CD8-positive, alpha-beta T cell (primary cell): ENCODE measurements at regions of chr6 and their contacts with region 1.

Region 1: GRCh38 chr6:3848925-3849605 is at the start of gene FAM50B:
- DNase-seq: peak; percentile 81 to 94 (median 90)
- ATAC-seq: peak; percentile 95
- H3K4me3 ChIP-seq: peak within 1 kb of the TSS; percentile 54 to 63
- H3K4me3 Mint-ChIP-seq: peak within 1 kb of the TSS; percentile 80
- H3K27ac ChIP-seq: peak within 1 kb of the TSS; percentile 47 to 56
- H3K27ac Mint-ChIP-seq: peak within 1 kb of the TSS; percentile 84
- H3K4me1 ChIP-seq: peaks cover 6% of the 10 kb centered on the region
- H3K4me1 Mint-ChIP-seq: peaks cover 18% of the 10 kb centered on the region
- H3K27me3 ChIP-seq: no peaks in the 10 kb centered on the region
- H3K27me3 Mint-ChIP-seq: no peaks in the 10 kb centered on the region
- CTCF ChIP-seq: peak; percentile 75
- total RNA-seq, gene FAM50B: 0.97 to 1.1 TPM

Region 2: GRCh38 chr6:3929281-3929798 is 80.3 kb after region 1 on chr6:
- CTCF ChIA-PET with region 1: interaction called, 17 read pairs
- POLR2A ChIA-PET with region 1: interaction called, 4 read pairs
- intact Hi-C with region 1: no loop called
- DNase-seq: no peak
- ATAC-seq: no peak
- H3K4me3 ChIP-seq: no peak overlapping the region
- H3K4me3 Mint-ChIP-seq: no peak overlapping the region
- H3K27ac ChIP-seq: no peak overlapping the region
- H3K27ac Mint-ChIP-seq: no peak overlapping the region
- H3K4me1 ChIP-seq: no peaks in the 10 kb centered on the region
- H3K4me1 Mint-ChIP-seq: no peaks in the 10 kb centered on the region
- H3K27me3 ChIP-seq: no peaks in the 10 kb centered on the region
- H3K27me3 Mint-ChIP-seq: peaks cover 10% of the 10 kb centered on the region
- CTCF ChIP-seq: no peak

Region 3: DNA sequence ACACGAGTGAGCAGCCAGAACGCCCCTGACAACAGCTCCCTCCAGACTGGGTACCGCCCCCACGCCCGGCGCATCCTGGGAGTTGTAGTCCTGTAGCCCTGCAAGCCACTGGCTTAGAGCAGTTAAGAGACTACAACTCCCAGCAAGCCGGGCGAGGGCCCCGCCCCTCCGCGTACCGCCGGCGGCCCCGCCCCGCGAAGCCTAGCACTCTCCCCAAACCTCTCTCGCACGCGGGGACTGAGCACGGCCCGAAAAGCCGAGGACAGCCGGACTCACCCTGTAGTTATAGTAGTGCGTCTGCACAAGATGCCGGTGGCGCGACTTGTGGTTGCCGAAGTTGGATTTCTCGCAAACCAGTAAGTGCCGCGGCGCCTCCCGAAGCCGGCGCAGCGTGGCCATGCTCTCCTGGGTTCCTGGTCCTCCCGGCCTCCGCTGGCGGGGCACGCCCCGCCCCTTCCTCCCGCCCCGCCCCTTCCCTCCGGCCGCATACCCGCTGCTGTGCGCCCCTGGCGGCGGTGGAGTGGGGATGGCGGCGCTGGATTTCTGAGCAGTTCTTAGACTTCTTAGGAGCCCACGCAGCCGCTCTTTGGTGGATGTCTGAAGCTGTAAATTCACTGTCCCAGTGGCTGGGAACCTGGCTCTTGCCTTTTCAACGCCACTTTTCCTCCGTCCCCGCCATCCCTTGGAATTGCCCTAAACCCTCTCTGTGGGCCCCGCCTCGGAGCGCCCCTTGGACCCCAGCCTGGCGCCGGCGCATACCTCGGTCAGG is 1154.7 kb after region 1 on chr6 and contains the start of gene RPP40:
- CTCF ChIA-PET with region 1: no interaction called
- POLR2A ChIA-PET with region 1: no interaction called
- intact Hi-C with region 1: loop called in 1 of 2 experiments (anchors 5 kb)
- DNase-seq: peak; percentile 97 to 99 (median 98)
- ATAC-seq: peak; percentile 94
- H3K4me3 ChIP-seq: peak within 1 kb of the TSS; percentile 80 to 95
- H3K4me3 Mint-ChIP-seq: peak within 1 kb of the TSS; percentile 94
- H3K27ac ChIP-seq: peak within 1 kb of the TSS; percentile 79 to 82
- H3K27ac Mint-ChIP-seq: peak within 1 kb of the TSS; percentile 97
- H3K4me1 ChIP-seq: peaks cover 8% of the 10 kb centered on the region
- H3K4me1 Mint-ChIP-seq: peaks cover 13% of the 10 kb centered on the region
- H3K27me3 ChIP-seq: no peaks in the 10 kb centered on the region
- H3K27me3 Mint-ChIP-seq: no peaks in the 10 kb centered on the region
- CTCF ChIP-seq: peak; percentile 84
- total RNA-seq, gene RPP40: 0.94 to 1.2 TPM